Mammary epithelial cell (primary cell): ENCODE measurements at regions of chrX and their contacts with region 1.

Region 1: DNA sequence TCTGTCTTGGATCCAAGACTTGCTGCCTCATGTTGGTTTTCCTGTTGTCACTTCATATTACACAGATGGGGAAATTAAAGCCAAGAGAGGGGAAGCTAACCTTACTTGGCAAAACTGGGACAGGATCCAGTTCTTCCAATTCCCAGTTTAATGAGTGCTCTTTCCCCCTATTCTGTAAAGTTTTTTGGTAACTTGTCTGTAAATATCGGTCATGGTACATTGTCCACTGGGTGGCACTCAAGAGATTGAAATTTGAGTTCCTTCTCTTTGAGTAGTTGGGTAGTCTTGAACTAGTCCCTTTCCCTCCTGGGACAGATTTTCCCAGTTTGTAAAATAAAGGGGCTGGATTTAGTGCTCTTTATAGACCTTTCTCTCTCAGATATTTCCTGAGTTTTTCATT is 12.4 kb upstream of the EOLA2 start:
- DNase-seq: peak; percentile 19
- H3K4me3 ChIP-seq: no peak overlapping the region
- H3K27ac ChIP-seq: no peak overlapping the region
- H3K4me1 ChIP-seq: peaks cover 2% of the 10 kb centered on the region
- H3K27me3 ChIP-seq: no peaks in the 10 kb centered on the region
- CTCF ChIP-seq: peak; percentile 44 to 48

Region 2: GRCh38 chrX:148815218-148815961 is 1135.3 kb before region 1 on chrX:
- CTCF ChIA-PET with region 1: no interaction called
- dilution Hi-C with region 1: no loop called
- in situ Hi-C with region 1: no loop called
- intact Hi-C with region 1: no loop called
- DNase-seq: peak; percentile 9
- H3K4me3 ChIP-seq: no peak overlapping the region
- H3K27ac ChIP-seq: no peak overlapping the region
- H3K4me1 ChIP-seq: peaks cover 6% of the 10 kb centered on the region
- H3K27me3 ChIP-seq: no peaks in the 10 kb centered on the region
- CTCF ChIP-seq: no peak

Region 3: GRCh38 chrX:150018931-150019361 is 68.3 kb after region 1 on chrX:
- CTCF ChIA-PET with region 1: no interaction called
- dilution Hi-C with region 1: no loop called
- in situ Hi-C with region 1: no loop called
- intact Hi-C with region 1: no loop called
- DNase-seq: no peak
- H3K4me3 ChIP-seq: no peak overlapping the region
- H3K27ac ChIP-seq: no peak overlapping the region
- H3K4me1 ChIP-seq: no peaks in the 10 kb centered on the region
- H3K27me3 ChIP-seq: no peaks in the 10 kb centered on the region
- CTCF ChIP-seq: no peak

Region 4: DNA sequence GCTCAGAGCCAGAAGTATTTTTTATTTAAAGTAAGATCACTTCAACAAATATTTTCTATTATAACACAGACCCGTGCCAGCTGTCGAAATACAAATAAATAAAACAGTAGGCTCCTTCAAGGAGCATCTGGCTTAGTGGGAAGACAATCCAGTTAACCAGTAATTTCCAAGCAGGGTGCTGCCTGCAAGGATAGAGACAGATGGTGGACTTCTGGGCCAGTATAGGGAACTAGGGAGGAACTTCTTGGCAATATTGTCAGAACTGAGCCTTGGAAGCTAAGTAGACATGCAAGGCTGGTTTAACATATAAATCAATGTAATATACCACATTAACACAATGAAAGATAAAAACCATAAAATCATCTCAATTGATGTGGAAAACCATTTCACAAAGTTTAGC is 725.5 kb after region 1 on chrX:
- CTCF ChIA-PET with region 1: interaction called, 11 read pairs
- dilution Hi-C with region 1: no loop called
- in situ Hi-C with region 1: loop called (anchors 25 kb)
- intact Hi-C with region 1: loop called (anchors 1 kb)
- DNase-seq: no peak
- H3K4me3 ChIP-seq: no peak overlapping the region
- H3K27ac ChIP-seq: no peak overlapping the region
- H3K4me1 ChIP-seq: no peaks in the 10 kb centered on the region
- H3K27me3 ChIP-seq: no peaks in the 10 kb centered on the region
- CTCF ChIP-seq: no peak

Region 5: DNA sequence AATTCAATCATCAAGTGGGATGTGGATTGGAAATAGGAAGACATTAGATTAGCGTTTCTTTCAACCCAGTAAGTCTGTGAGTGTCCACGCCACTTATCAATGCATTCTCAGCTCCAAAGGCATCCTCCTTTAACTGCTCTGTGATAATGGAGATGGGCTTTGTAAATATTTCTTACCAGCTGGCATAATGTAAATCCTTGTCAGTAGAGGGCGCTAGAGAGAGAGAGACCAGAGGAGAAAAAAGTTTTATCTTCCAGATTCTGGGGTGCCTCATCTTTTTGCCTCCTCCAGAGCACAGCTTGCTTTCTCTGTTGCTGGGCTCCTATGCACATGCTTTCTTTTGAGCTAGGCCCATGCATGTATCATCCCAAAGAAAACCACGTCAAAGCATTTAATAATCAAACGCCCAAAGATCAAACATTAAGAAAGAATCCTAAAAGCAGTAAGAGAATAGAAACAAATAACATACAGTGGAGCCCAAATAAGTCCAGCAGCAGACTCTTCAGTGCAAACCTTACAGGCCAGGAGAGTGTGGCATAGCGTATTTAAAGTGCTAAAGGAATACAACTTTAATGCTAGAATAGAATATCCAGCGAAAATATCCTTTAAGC is 733.0 kb after region 1 on chrX:
- CTCF ChIA-PET with region 1: interaction called, 11 read pairs
- dilution Hi-C with region 1: no loop called
- in situ Hi-C with region 1: loop called (anchors 25 kb)
- intact Hi-C with region 1: loop called (anchors 1 kb)
- DNase-seq: peak; percentile 27
- H3K4me3 ChIP-seq: no peak overlapping the region
- H3K27ac ChIP-seq: no peak overlapping the region
- H3K4me1 ChIP-seq: peaks cover 8% of the 10 kb centered on the region
- H3K27me3 ChIP-seq: no peaks in the 10 kb centered on the region
- CTCF ChIP-seq: peak; percentile 34 to 53